ENCODE measurements at regions of chr12 and their contacts with region 1.

Region 1: GRCh38 chr12:98002712-98003493 is 512.5 kb upstream of the TMPO start:
- DNase-seq: no peak
- H3K4me3 ChIP-seq: no peak overlapping the region
- H3K27ac ChIP-seq: no peak overlapping the region
- H3K4me1 ChIP-seq: peaks cover 0 to 2% (median 0%) of the 10 kb centered on the region in 4 donors
- H3K27me3 ChIP-seq: no peaks in the 10 kb centered on the region
- CTCF ChIP-seq: peak; percentile 37 to 60 (median 49)
- EP300 ChIP-seq: no peak
- POLR2A ChIP-seq: no peak

Region 2: DNA sequence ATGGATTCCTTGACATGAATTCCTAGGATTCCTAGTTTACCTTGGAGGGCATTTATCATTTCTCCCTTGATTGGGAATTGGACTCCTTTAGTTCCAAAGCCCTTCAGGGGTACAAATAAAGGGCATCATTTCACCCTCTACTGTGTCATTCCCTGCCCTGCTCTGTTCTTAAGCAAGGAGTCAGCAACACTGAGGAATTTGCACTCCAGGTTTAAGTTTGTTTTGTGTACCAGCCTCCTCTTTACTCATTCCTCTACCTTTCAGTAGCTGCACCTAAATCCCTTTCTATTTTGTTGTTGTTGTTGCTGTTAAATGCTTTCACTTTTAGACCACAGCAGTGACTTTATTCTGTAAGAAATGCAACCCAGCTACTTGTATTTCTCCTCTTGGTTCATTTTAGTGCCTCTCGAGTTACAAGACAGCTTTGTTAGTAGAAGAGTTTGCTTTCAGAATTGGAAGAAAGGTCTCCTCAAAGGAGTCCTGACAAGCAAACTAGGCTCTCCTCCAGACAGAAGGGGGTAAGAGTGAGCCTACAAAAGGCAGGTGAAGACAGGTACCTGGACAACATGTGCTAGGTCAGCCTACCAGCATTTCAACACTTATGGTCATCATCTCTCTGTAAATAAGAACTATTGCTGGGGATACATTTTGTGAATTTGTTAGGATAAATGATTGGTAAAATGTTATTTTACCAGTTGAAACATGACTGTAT is 450.3 kb before region 1 on chr12:
- intact Hi-C with region 1: no loop called
- DNase-seq: no peak
- H3K4me3 ChIP-seq: no peak overlapping the region
- H3K27ac ChIP-seq: no peak overlapping the region
- H3K4me1 ChIP-seq: peaks cover 0 to 7% (median 0%) of the 10 kb centered on the region in 4 donors
- H3K27me3 ChIP-seq: no peaks in the 10 kb centered on the region
- CTCF ChIP-seq: no peak
- EP300 ChIP-seq: no peak
- POLR2A ChIP-seq: no peak

Region 3: DNA sequence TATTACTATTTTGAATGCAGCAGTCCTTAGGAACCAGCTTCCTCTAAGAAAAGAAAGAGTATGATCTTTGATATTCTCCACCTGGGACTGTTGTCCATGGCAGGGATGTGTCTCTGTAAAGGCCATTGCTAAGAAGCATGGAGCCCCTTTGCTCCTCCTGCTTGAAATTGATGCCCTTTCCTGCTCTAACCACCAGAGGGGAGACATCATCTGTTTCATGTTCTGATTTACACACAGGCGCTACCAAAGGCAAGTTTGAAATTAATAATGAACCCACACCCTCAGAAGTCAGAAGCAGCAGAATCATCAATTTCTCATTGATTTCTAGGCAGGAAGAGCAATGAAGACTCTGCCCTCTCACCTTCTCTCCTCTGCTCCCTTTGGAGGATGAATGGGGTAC is 286.5 kb before region 1 on chr12:
- intact Hi-C with region 1: loop called (anchors 5 kb)
- DNase-seq: no peak
- H3K4me3 ChIP-seq: no peak overlapping the region
- H3K27ac ChIP-seq: no peak overlapping the region
- H3K4me1 ChIP-seq: peaks cover 0 to 6% (median 0%) of the 10 kb centered on the region in 4 donors
- H3K27me3 ChIP-seq: no peaks in the 10 kb centered on the region
- CTCF ChIP-seq: peak; percentile 33 to 58 (median 38)
- EP300 ChIP-seq: no peak
- POLR2A ChIP-seq: no peak

Measured in esophagus muscularis mucosa (tissue), 4 donors.